MCF 10A (cell line): ENCODE measurements at regions of chr4 and their contacts with region 1.

Region 1: DNA sequence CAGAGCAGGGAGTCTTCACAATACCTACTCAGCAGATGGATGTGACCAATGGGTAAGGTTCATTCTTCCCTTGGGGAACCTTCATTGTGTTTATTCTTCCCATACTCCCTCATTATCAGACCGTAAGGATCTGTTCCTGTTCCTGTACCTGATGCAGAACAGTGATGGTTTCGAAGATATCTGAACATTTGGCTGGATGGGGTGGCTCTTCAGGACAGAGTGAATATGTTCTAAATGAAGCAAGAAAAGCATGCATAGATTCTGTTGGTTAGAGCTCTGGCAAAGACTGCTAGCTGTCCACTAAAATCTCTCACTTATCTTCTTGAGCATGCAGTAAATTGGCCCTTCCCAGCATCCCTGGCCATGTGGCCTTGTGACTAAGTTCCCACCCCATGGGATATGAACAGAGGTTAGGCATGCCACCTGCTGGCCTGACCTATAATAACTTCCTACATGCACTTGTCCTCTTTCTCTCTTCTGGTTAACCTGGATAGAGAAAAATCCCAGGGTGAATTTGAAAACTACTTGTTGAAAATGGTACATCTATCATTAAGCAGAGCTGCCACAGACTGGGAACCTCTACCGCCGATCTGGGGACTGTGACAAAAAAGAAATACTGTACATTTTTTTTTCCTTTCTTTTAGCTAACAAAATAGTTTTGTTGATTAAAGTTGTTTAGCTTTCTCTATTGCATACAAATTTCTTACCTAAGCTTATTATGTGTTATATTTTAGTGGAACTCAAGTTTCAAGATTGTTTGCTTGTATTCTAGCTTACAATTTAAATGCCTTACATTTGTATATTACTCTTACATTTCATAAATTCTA is 60.0 kb upstream of the BANK1 start:
- DNase-seq: peak; percentile 77
- H3K4me3 Mint-ChIP-seq: no peak overlapping the region
- H3K27ac Mint-ChIP-seq: no peak overlapping the region
- H3K4me1 Mint-ChIP-seq: no peaks in the 10 kb centered on the region
- H3K27me3 Mint-ChIP-seq: no peaks in the 10 kb centered on the region
- CTCF ChIP-seq: peak; percentile 57

Region 2: DNA sequence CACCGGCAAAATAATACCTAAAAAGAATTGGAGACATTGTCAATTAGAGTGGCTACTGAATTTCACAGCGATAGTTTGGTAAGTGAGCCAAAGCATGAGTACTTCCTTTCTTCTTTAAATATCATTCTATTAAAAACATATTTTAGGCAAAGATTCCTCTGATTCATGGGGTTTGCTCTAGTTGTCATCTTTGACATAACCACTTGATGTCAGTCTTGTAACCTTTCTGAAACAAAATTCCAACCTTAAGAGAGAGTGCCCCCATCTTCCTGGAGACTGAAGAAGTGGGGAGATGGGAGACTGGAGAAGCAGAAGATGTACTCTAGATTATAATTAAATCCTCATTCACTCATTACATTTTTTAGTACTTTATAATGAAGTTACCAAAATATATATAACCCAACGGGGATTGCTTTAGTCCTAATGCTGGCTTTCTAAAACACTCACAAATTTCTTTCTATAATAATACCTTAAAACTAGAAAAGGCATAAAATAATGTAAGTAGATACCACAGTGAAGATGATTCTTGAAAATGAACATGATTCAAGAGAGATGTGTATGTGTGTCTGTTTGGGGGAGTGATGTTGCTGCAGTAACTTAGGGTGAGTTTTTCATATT is 1309.0 kb before region 1 on chr4:
- CTCF ChIA-PET with region 1: no interaction called
- POLR2A ChIA-PET with region 1: no interaction called
- intact Hi-C with region 1: loop called (anchors 5 kb)
- DNase-seq: peak; percentile 58
- H3K4me3 Mint-ChIP-seq: no peak overlapping the region
- H3K27ac Mint-ChIP-seq: peak overlapping the region; percentile 80
- H3K4me1 Mint-ChIP-seq: peaks cover 12% of the 10 kb centered on the region
- H3K27me3 Mint-ChIP-seq: no peaks in the 10 kb centered on the region
- CTCF ChIP-seq: peak; percentile 69

Region 3: DNA sequence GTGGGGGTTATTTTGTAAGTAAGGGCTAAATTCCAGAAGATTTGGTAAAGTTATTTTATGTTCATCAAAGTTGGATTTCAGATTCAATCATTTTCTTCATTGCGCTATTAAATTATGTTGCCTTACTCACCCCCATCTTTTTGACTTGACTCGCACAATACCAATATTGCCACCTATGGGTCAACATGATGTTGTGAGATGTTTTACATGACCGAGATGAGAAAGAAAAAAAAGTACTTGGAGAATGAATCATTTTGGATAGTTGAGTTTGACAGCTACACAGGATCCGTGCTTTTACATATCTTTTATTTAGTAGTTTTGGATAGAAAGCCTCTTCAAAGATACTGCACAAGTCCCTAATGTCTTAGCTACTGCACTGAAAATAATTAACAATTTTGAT is 988.5 kb before region 1 on chr4:
- CTCF ChIA-PET with region 1: no interaction called
- POLR2A ChIA-PET with region 1: no interaction called
- intact Hi-C with region 1: loop called (anchors 10 kb)
- DNase-seq: peak; percentile 77
- H3K4me3 Mint-ChIP-seq: no peak overlapping the region
- H3K27ac Mint-ChIP-seq: no peak overlapping the region
- H3K4me1 Mint-ChIP-seq: peaks cover 22% of the 10 kb centered on the region
- H3K27me3 Mint-ChIP-seq: no peaks in the 10 kb centered on the region
- CTCF ChIP-seq: peak; percentile 53

Region 4: GRCh38 chr4:100848869-100849268 is 881.6 kb before region 1 on chr4:
- CTCF ChIA-PET with region 1: no interaction called
- POLR2A ChIA-PET with region 1: no interaction called
- intact Hi-C with region 1: loop called (anchors 5 kb)
- DNase-seq: peak; percentile 17
- H3K4me3 Mint-ChIP-seq: no peak overlapping the region
- H3K27ac Mint-ChIP-seq: no peak overlapping the region
- H3K4me1 Mint-ChIP-seq: no peaks in the 10 kb centered on the region
- H3K27me3 Mint-ChIP-seq: no peaks in the 10 kb centered on the region
- CTCF ChIP-seq: peak; percentile 4

Region 5: DNA sequence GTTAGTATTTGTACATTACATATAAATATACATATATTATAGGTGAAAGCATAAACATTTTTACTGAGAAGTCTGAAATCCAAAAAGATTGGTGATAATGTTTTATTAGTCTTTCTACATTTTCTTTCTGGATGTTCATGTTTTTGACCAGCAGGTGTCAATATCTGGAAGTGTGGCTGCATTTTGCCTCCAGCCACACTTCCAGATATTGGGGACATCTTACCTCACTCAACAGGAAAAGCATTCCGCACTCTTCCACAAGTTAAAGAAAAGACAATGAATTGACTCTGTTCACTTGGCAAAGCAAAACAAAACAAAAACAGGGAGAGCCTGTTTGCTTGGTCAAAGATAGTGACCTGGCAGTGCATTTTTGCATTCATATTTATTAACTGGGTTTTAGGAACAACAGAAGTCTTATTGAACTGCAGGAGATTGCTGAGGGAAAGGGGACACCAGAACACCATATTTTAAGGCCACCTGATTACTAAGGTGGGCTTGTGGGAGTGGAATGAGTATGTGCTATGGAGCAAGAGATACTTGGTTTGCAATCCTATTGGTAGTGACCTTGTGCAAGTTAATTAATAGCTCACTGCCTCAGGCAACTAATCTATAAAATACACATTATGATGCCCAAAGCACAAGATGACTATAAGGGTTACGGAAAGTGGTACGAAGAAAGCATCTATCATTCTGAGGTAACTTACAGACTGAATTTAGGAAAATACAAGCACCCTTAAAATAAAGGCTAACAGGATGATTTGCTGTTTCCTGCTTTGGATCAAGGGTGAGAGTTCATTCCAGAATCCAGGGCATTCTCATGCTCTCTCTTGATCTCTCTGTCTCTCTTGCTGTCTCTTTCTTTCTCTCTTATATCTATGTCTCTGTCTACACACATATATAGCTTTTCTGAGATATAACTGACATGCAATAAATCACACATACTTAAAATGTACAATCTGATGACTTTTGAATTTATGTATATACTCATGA is 822.7 kb before region 1 on chr4:
- CTCF ChIA-PET with region 1: no interaction called
- POLR2A ChIA-PET with region 1: no interaction called
- intact Hi-C with region 1: loop called (anchors 2 kb)
- DNase-seq: peak; percentile 31
- H3K4me3 Mint-ChIP-seq: no peak overlapping the region
- H3K27ac Mint-ChIP-seq: no peak overlapping the region
- H3K4me1 Mint-ChIP-seq: peaks cover 4% of the 10 kb centered on the region
- H3K27me3 Mint-ChIP-seq: no peaks in the 10 kb centered on the region
- CTCF ChIP-seq: peak; percentile 39

Region 6: GRCh38 chr4:101169044-101170014 is 561.2 kb before region 1 on chr4:
- CTCF ChIA-PET with region 1: interaction called, 3 read pairs
- POLR2A ChIA-PET with region 1: no interaction called
- intact Hi-C with region 1: loop called (anchors 1 kb)
- DNase-seq: peak; percentile 85
- H3K4me3 Mint-ChIP-seq: no peak overlapping the region
- H3K27ac Mint-ChIP-seq: no peak overlapping the region
- H3K4me1 Mint-ChIP-seq: peaks cover 20% of the 10 kb centered on the region
- H3K27me3 Mint-ChIP-seq: no peaks in the 10 kb centered on the region
- CTCF ChIP-seq: peak; percentile 44

Region 7: GRCh38 chr4:101187841-101188240 is 542.7 kb before region 1 on chr4:
- CTCF ChIA-PET with region 1: interaction called, 18 read pairs
- POLR2A ChIA-PET with region 1: interaction called, 4 read pairs
- intact Hi-C with region 1: loop called (anchors 1 kb)
- DNase-seq: peak; percentile 43
- H3K4me3 Mint-ChIP-seq: no peak overlapping the region
- H3K27ac Mint-ChIP-seq: no peak overlapping the region
- H3K4me1 Mint-ChIP-seq: peaks cover 26% of the 10 kb centered on the region
- H3K27me3 Mint-ChIP-seq: no peaks in the 10 kb centered on the region
- CTCF ChIP-seq: peak; percentile 30